Psoas muscle (tissue), 8 donors: ENCODE measurements at regions of chr2 and their contacts with region 1.

Region 1: GRCh38 chr2:18047850-18048249 is 169.4 kb downstream of the KCNS3 start:
- DNase-seq: peak; percentile 27 to 76
- ATAC-seq: peak; percentile 83 to 95 (median 88)
- H3K4me3 ChIP-seq: peak overlapping the region; percentile 10
- H3K27ac ChIP-seq: peak overlapping the region; percentile 51
- H3K4me1 ChIP-seq: peaks cover 15% of the 10 kb centered on the region
- H3K27me3 ChIP-seq: no peaks in the 10 kb centered on the region
- CTCF ChIP-seq: no peak

Region 2: GRCh38 chr2:17857021-17857420 is 190.8 kb before region 1 on chr2:
- intact Hi-C with region 1: no loop called
- DNase-seq: no peak
- ATAC-seq: no peak
- H3K4me3 ChIP-seq: no peak overlapping the region
- H3K27ac ChIP-seq: no peak overlapping the region
- H3K4me1 ChIP-seq: no peaks in the 10 kb centered on the region
- H3K27me3 ChIP-seq: no peaks in the 10 kb centered on the region
- CTCF ChIP-seq: no peak

Region 3: DNA sequence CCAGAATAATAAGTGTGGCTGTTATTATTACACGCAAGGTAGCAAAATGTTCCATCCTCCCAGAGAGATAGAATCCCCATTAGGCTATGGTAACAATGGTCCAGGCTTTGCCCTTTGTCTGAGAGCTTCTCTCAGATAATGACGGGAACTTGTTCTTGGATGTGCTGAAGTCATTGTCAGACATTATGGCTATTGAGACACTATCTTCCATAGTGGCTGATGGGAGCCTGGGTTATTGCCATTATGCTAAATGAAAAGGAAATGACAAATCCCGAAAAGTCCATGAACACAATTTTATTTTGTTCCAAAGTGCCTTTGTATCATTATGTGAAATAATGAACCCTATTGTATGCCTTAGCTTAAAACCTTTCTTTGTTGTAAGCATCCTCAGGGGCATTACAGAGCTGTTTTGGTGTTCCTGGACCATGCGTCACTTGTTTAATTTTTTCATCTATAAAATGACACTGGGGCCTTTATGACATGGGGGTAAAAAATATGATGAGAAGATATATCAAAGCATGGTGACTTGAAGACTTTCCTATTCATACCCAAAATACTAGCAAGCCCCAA is 49.1 kb after region 1 on chr2:
- intact Hi-C with region 1: loop called in 1 of 2 experiments (anchors 5 kb)
- DNase-seq: no peak
- ATAC-seq: no peak
- H3K4me3 ChIP-seq: no peak overlapping the region
- H3K27ac ChIP-seq: no peak overlapping the region
- H3K4me1 ChIP-seq: peaks cover 27% of the 10 kb centered on the region
- H3K27me3 ChIP-seq: no peaks in the 10 kb centered on the region
- CTCF ChIP-seq: no peak